ENCODE measurements at regions of chr6 and their contacts with region 1.

Region 1: GRCh38 chr6:43698584-43699349 is 11.2 kb upstream of the MRPS18A start:
- DNase-seq: peak; percentile 78
- ATAC-seq: peak; percentile 46

Region 2: GRCh38 chr6:44976719-44977641 is 1278.2 kb after region 1 on chr6:
- intact Hi-C with region 1: loop called (anchors 10 kb)
- DNase-seq: no peak
- ATAC-seq: no peak

Measured in sciatic nerve (tissue), 2 donors.